PC-3 (cell line): ENCODE measurements at regions of chr11 and their contacts with region 1.

Region 1: DNA sequence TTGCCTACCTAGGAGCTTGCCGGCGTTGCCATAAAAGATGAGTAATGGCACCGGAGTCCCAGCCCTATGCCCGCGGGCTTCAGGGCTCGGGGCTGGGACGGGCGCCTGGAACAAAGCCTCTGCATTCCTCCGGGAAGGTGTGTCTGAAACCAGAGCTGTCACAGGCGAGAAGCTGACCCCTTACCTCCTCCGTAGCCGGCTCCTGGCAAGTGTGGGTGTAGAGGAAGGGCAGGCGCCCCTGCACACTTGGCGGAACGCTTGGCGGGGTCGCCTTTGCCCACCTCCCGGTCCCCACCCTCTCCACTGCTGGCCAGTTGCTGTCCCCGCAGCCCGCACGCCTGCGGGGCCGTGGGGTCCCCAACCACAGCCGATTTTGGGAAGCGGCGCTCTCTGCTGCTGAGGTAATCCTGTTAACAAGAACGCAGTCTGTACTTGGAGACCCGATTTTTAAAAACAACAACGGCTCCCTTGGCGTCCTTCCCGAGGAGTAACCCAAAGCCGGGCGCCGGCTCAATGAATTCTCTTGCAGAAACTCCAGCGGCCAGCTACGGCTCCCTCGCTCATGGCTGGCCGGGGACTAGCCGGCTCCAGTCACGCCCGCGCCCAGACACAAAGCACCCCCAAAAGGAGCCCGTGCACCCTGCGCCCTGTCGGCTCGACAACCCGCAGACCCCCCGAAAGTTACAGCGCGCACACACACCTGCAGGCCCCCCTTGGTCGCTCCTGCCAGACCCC is 89.2 kb downstream of the PLEKHA7 start:
- DNase-seq: peak; percentile 96
- ATAC-seq: peak; percentile 86
- H3K4me3 ChIP-seq: peak overlapping the region; percentile 89
- H3K27ac ChIP-seq: peak overlapping the region; percentile 69
- H3K4me1 ChIP-seq: peaks cover 31% of the 10 kb centered on the region
- H3K27me3 ChIP-seq: no peaks in the 10 kb centered on the region
- CTCF ChIP-seq: no peak

Region 2: GRCh38 chr11:16820324-16821092 is 104.5 kb before region 1 on chr11:
- CTCF ChIA-PET with region 1: no interaction called
- POLR2A ChIA-PET with region 1: no interaction called
- intact Hi-C with region 1: loop called (anchors 5 kb)
- DNase-seq: peak; percentile 86
- ATAC-seq: peak; percentile 77
- H3K4me3 ChIP-seq: no peak overlapping the region
- H3K27ac ChIP-seq: no peak overlapping the region
- H3K4me1 ChIP-seq: peaks cover 29% of the 10 kb centered on the region
- H3K27me3 ChIP-seq: no peaks in the 10 kb centered on the region
- CTCF ChIP-seq: peak; percentile 93